ENCODE measurements at regions of chr11 and their contacts with region 1.

Region 1: DNA sequence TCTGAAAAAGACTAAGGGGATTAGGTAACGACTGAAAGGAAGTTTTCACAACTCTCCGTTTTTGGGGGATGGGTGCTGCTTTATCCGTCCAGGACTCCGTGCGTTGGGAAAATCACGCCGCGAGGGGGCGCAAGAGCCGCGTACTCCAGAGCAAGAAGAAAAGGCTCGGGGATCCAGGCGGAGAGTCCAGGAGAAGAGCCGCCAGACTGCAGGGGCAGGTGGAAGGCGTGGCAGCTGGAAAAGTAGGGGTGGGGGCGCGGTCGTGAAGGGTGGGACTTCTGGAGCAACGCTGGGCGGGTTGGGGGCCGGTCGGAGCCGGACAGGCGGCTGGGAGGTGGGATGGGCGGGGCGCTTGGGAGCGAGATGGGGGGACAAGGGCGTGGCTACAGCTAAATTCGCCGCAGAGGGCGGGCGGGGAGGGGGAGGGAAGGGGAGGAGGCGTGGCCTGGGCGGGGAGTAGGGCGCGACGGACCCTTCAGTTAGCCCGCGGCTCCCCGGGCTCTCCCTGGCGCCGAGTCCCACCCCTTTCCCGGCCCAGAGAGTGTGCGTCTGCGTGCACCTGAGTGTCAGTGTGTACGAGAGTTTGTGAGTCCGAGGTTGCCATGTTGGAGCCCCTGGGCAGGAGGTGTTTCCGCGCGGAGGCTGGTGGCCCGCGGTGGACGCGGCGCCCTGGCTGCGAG is 613 bp upstream of the ARHGEF17 start:
- DNase-seq: peak; percentile 100
- H3K4me3 ChIP-seq: peak overlapping the region; percentile 72
- H3K27ac ChIP-seq: peak overlapping the region; percentile 83
- H3K4me1 ChIP-seq: peaks cover 24% of the 10 kb centered on the region
- H3K27me3 ChIP-seq: no peaks in the 10 kb centered on the region
- CTCF ChIP-seq: peak; percentile 98

Region 2: GRCh38 chr11:73295231-73295995 is 12.1 kb before region 1 on chr11:
- CTCF ChIA-PET with region 1: interaction called, 4 read pairs
- POLR2A ChIA-PET with region 1: interaction called, 10 read pairs
- intact Hi-C with region 1: no loop called
- DNase-seq: peak; percentile 89
- H3K4me3 ChIP-seq: no peak overlapping the region
- H3K27ac ChIP-seq: no peak overlapping the region
- H3K4me1 ChIP-seq: peaks cover 4% of the 10 kb centered on the region
- H3K27me3 ChIP-seq: no peaks in the 10 kb centered on the region
- CTCF ChIP-seq: peak; percentile 99

Region 3: DNA sequence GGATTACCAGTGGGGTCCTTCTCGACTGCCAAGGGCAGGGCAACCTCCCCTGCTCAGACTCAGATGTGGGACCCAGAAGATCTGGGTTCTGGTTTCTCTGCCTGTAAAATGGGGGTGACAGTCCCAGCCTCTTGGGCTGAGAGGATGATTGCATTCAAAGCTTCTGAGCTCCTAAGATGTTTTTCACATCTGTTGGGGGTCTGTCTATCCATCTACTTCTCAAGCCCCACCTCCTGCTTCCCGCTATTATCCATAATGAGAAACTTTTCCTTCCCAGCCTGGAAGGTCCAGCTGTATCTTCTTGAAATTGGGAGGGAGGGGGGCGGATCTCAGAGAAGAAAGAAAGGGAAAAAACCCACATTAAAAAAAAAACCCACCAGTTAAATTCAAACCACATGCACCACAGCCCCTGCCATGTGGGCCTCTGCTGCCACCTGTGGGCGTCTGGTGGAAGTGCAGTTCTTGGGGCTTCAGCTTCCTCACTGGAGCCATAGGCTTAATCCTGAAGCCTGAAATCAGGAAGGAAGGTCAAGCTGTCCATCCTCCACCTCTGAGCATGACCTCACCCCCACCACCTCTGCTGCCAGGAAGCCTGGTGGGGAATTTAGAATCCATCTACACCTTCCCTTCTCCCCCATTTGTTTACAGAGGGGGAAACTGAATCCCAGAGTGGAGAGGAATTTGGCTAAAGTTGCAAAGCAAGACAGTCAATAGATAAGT is 27.9 kb after region 1 on chr11:
- CTCF ChIA-PET with region 1: interaction called, 60 read pairs
- POLR2A ChIA-PET with region 1: no interaction called
- intact Hi-C with region 1: loop called (anchors 1 kb)
- DNase-seq: peak; percentile 94
- H3K4me3 ChIP-seq: no peak overlapping the region
- H3K27ac ChIP-seq: peak overlapping the region; percentile 70
- H3K4me1 ChIP-seq: peaks cover 36% of the 10 kb centered on the region
- H3K27me3 ChIP-seq: no peaks in the 10 kb centered on the region
- CTCF ChIP-seq: peak; percentile 100

Region 4: DNA sequence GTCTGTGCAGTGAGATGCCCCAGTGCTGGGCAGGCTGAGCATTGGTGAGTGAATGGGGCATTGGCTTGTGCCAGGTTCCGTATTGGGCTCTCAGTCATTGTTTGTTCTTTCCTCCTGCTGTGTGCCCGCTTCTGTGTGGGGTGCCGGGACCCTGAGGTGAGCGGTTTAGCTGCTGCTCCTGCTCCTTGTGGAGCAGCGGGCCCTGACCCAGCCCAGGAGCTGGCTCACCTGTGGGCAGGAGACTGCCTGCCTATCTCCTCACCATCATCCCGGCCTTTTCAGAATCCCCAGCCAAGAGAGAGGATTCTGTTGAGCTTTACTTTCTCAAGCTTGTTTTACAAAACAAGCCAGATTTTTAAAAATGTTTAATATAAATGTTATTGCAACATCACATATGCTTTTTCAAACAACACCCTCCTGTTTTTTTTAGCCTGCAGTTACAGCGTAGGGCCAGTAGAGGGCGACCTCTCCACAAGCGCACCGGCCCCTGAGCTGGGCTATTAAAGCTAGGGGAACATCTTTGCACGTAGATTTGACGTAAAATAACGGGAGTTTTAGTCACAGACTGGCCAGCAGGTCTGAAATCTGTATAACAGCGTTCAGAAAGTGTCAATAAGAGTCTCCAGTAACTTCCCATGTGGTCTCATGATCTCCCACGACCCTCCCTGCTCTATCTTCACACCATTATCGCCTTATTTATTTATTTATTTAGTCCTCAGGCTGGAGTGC is 43.6 kb after region 1 on chr11:
- CTCF ChIA-PET with region 1: interaction called, 12 read pairs
- POLR2A ChIA-PET with region 1: no interaction called
- intact Hi-C with region 1: no loop called
- DNase-seq: peak; percentile 87
- H3K4me3 ChIP-seq: no peak overlapping the region
- H3K27ac ChIP-seq: no peak overlapping the region
- H3K4me1 ChIP-seq: no peaks in the 10 kb centered on the region
- H3K27me3 ChIP-seq: no peaks in the 10 kb centered on the region
- CTCF ChIP-seq: peak; percentile 100

Region 5: GRCh38 chr11:73360336-73361013 is 53.0 kb after region 1 on chr11:
- CTCF ChIA-PET with region 1: interaction called, 21 read pairs
- POLR2A ChIA-PET with region 1: no interaction called
- intact Hi-C with region 1: no loop called
- DNase-seq: peak; percentile 73
- H3K4me3 ChIP-seq: no peak overlapping the region
- H3K27ac ChIP-seq: no peak overlapping the region
- H3K4me1 ChIP-seq: no peaks in the 10 kb centered on the region
- H3K27me3 ChIP-seq: no peaks in the 10 kb centered on the region
- CTCF ChIP-seq: peak; percentile 67

Region 6: GRCh38 chr11:73393479-73394380 is 86.3 kb after region 1 on chr11:
- CTCF ChIA-PET with region 1: interaction called, 29 read pairs
- POLR2A ChIA-PET with region 1: no interaction called
- intact Hi-C with region 1: loop called (anchors 1 kb)
- DNase-seq: peak; percentile 88
- H3K4me3 ChIP-seq: no peak overlapping the region
- H3K27ac ChIP-seq: no peak overlapping the region
- H3K4me1 ChIP-seq: peaks cover 11% of the 10 kb centered on the region
- H3K27me3 ChIP-seq: no peaks in the 10 kb centered on the region
- CTCF ChIP-seq: peak; percentile 94

Region 7: GRCh38 chr11:73760679-73761402 is 453.4 kb after region 1 on chr11 and contains the start of gene RAB6A:
- CTCF ChIA-PET with region 1: no interaction called
- POLR2A ChIA-PET with region 1: interaction called, 10 read pairs
- intact Hi-C with region 1: no loop called
- DNase-seq: peak; percentile 100
- H3K4me3 ChIP-seq: peak within 1 kb of the TSS; percentile 88
- H3K27ac ChIP-seq: peak within 1 kb of the TSS; percentile 90
- H3K4me1 ChIP-seq: peaks cover 16% of the 10 kb centered on the region
- H3K27me3 ChIP-seq: no peaks in the 10 kb centered on the region
- CTCF ChIP-seq: peak; percentile 35; the same call in 1 of the 2 replicates
- total RNA-seq, gene RAB6A: 104 and 105 TPM in 2 replicates